ENCODE measurements at regions of chr17 and their contacts with region 1.

Region 1: GRCh38 chr17:19362277-19363113 is at the start of gene B9D1:
- DNase-seq: peak; percentile 91 to 94 (median 94)
- ATAC-seq: peak; percentile 94
- H3K4me3 ChIP-seq: peak within 1 kb of the TSS; percentile 76
- H3K27ac ChIP-seq: peak within 1 kb of the TSS; percentile 75
- H3K4me1 ChIP-seq: peaks cover 6 to 24% of the 10 kb centered on the region in 2 experiments; a peak in 4 of 5 replicates
- H3K27me3 ChIP-seq: no peaks in the 10 kb centered on the region
- CTCF ChIP-seq: peak; percentile 87 to 99 (median 98)
- EP300 ChIP-seq: no peak
- POLR2A ChIP-seq: peak; percentile 56; the same call in 1 of the 2 replicates
- RAD21 ChIP-seq: peak; percentile 90 to 95
- polyA plus RNA-seq, gene B9D1: 9.5 to 17.9 TPM

Region 2: GRCh38 chr17:19019036-19019941 is 343.2 kb before region 1 on chr17:
- CTCF ChIA-PET with region 1: no interaction called
- POLR2A ChIA-PET with region 1: no interaction called
- in situ Hi-C with region 1: no loop called
- intact Hi-C with region 1: no loop called
- DNase-seq: peak; percentile 42 to 83 (median 66)
- ATAC-seq: peak; percentile 23; the same call in 1 of the 3 replicates
- H3K4me3 ChIP-seq: no peak overlapping the region
- H3K27ac ChIP-seq: no peak overlapping the region
- H3K4me1 ChIP-seq: peaks cover 9 to 47% of the 10 kb centered on the region in 2 experiments; a peak in 4 of 5 replicates
- H3K27me3 ChIP-seq: no peaks in the 10 kb centered on the region
- CTCF ChIP-seq: no peak
- EP300 ChIP-seq: no peak
- POLR2A ChIP-seq: no peak
- RAD21 ChIP-seq: no peak

Region 3: GRCh38 chr17:19377602-19378392 is 15.3 kb after region 1 on chr17:
- CTCF ChIA-PET with region 1: no interaction called
- POLR2A ChIA-PET with region 1: interaction called, 11 read pairs
- in situ Hi-C with region 1: no loop called
- intact Hi-C with region 1: no loop called
- DNase-seq: peak; percentile 92 to 97 (median 95)
- ATAC-seq: peak; percentile 98
- H3K4me3 ChIP-seq: peak overlapping the region; percentile 65
- H3K27ac ChIP-seq: peak overlapping the region; percentile 83
- H3K4me1 ChIP-seq: peaks cover 0 to 11% of the 10 kb centered on the region in 2 experiments; a peak in 3 of 5 replicates
- H3K27me3 ChIP-seq: no peaks in the 10 kb centered on the region; a peak in 1 of 5 replicates
- CTCF ChIP-seq: no peak
- EP300 ChIP-seq: no peak
- POLR2A ChIP-seq: peak; percentile 83
- RAD21 ChIP-seq: no peak

Region 4: GRCh38 chr17:19424934-19425868 is 62.7 kb after region 1 on chr17:
- CTCF ChIA-PET with region 1: no interaction called
- POLR2A ChIA-PET with region 1: no interaction called
- in situ Hi-C with region 1: no loop called
- intact Hi-C with region 1: no loop called
- DNase-seq: no peak
- ATAC-seq: no peak
- H3K4me3 ChIP-seq: no peak overlapping the region
- H3K27ac ChIP-seq: no peak overlapping the region
- H3K4me1 ChIP-seq: no peaks in the 10 kb centered on the region
- H3K27me3 ChIP-seq: peaks cover 8 to 16% of the 10 kb centered on the region in 2 experiments; a peak in 3 of 5 replicates
- CTCF ChIP-seq: no peak
- EP300 ChIP-seq: no peak
- POLR2A ChIP-seq: no peak
- RAD21 ChIP-seq: no peak

Region 5: GRCh38 chr17:19447085-19447583 is 84.6 kb after region 1 on chr17:
- CTCF ChIA-PET with region 1: interaction called, 14 read pairs
- POLR2A ChIA-PET with region 1: no interaction called
- in situ Hi-C with region 1: loop called (anchors 5 kb)
- intact Hi-C with region 1: loop called (anchors 1 kb)
- DNase-seq: peak; percentile 50 to 66 (median 57)
- ATAC-seq: peak; percentile 59
- H3K4me3 ChIP-seq: no peak overlapping the region
- H3K27ac ChIP-seq: no peak overlapping the region
- H3K4me1 ChIP-seq: peaks cover 0 to 3% of the 10 kb centered on the region in 2 experiments; a peak in 1 of 5 replicates
- H3K27me3 ChIP-seq: peaks cover 0 to 2% of the 10 kb centered on the region in 2 experiments; a peak in 1 of 5 replicates
- CTCF ChIP-seq: peak; percentile 67 to 81 (median 67)
- EP300 ChIP-seq: no peak
- POLR2A ChIP-seq: no peak
- RAD21 ChIP-seq: peak; percentile 69 to 83

Region 6: DNA sequence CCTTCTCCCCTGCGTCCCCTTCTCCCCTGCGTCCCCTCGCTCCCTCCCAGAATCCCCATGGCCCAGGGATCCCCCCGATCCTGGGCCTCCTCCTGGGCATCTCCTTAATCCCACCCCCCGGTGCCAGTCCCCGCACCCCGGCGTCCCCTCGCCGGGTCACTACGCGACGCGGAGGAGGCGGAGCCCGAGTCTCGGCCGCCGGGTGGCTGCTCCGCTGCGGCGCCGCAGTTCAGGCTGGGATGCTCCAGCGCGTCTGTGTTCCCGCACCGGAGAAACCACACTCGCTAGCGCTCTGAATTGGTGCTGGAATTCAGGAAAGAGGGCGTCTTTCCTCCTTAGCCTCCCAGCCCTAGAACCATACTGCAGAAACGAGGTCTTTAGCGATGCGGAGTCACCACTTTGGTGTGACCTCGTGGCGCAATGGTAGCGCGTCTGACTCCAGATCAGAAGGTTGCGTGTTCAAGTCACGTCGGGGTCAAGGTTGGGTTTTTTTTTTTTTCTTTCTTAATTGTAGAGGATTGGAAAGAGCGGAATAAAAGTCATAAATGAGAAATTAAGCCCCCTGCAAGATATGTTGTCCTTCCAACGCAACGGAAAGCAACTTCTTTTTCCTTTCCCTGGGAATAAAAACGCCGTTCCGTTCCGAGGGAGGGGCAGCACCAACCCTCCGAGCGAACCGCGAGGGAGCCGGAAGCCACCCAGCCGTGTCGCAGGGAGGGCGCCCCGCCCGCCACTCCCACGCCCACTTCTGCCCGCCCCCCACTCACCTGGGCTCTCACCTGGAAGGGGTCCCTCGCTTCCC is 145.5 kb after region 1 on chr17:
- CTCF ChIA-PET with region 1: no interaction called
- POLR2A ChIA-PET with region 1: no interaction called
- in situ Hi-C with region 1: no loop called
- intact Hi-C with region 1: no loop called
- DNase-seq: peak; percentile 56 to 67 (median 60)
- ATAC-seq: peak; percentile 88
- H3K4me3 ChIP-seq: peak overlapping the region; percentile 58
- H3K27ac ChIP-seq: no peak overlapping the region
- H3K4me1 ChIP-seq: peaks cover 0 to 11% of the 10 kb centered on the region in 2 experiments; a peak in 2 of 5 replicates
- H3K27me3 ChIP-seq: no peaks in the 10 kb centered on the region; a peak in 1 of 5 replicates
- CTCF ChIP-seq: no peak
- EP300 ChIP-seq: peak; percentile 28; the same call in 1 of the 2 replicates
- POLR2A ChIP-seq: no peak
- RAD21 ChIP-seq: no peak

Region 7: GRCh38 chr17:19766422-19767270 is 404.2 kb after region 1 on chr17:
- CTCF ChIA-PET with region 1: no interaction called
- POLR2A ChIA-PET with region 1: no interaction called
- in situ Hi-C with region 1: loop called (anchors 10 kb)
- intact Hi-C with region 1: no loop called
- DNase-seq: peak; percentile 69 to 72 (median 70)
- ATAC-seq: peak; percentile 99
- H3K4me3 ChIP-seq: no peak overlapping the region
- H3K27ac ChIP-seq: no peak overlapping the region
- H3K4me1 ChIP-seq: no peaks in the 10 kb centered on the region
- H3K27me3 ChIP-seq: peaks cover 0 to 14% of the 10 kb centered on the region in 2 experiments; a peak in 1 of 5 replicates
- CTCF ChIP-seq: peak; percentile 79 to 87 (median 80)
- EP300 ChIP-seq: no peak
- POLR2A ChIP-seq: no peak
- RAD21 ChIP-seq: peak; percentile 66 to 87

Measured in K562 (cell line).